ENCODE measurements at regions of chr1 and their contacts with region 1.

Region 1: GRCh38 chr1:154272217-154272998 is at the start of gene HAX1:
- DNase-seq: peak; percentile 99
- H3K4me3 Mint-ChIP-seq: peak within 1 kb of the TSS; percentile 99
- H3K27ac Mint-ChIP-seq: peak within 1 kb of the TSS; percentile 99
- H3K4me1 Mint-ChIP-seq: peaks cover 34% of the 10 kb centered on the region
- H3K27me3 Mint-ChIP-seq: no peaks in the 10 kb centered on the region
- total RNA-seq, gene HAX1: 168 to 169 TPM

Region 2: GRCh38 chr1:153967082-153968000 is 305.1 kb before region 1 on chr1 and contains the start of gene CREB3L4:
- CTCF ChIA-PET with region 1: no interaction called
- POLR2A ChIA-PET with region 1: no interaction called
- intact Hi-C with region 1: loop called (anchors 10 kb)
- DNase-seq: peak; percentile 92
- H3K4me3 Mint-ChIP-seq: peak within 1 kb of the TSS; percentile 87
- H3K27ac Mint-ChIP-seq: peak within 1 kb of the TSS; percentile 90
- H3K4me1 Mint-ChIP-seq: peaks cover 41% of the 10 kb centered on the region
- H3K27me3 Mint-ChIP-seq: no peaks in the 10 kb centered on the region
- total RNA-seq, gene CREB3L4: 8.5 to 8.7 TPM

Region 3: GRCh38 chr1:154198756-154199562 is 73.4 kb before region 1 on chr1:
- CTCF ChIA-PET with region 1: interaction called, 38 read pairs
- POLR2A ChIA-PET with region 1: no interaction called
- intact Hi-C with region 1: loop called (anchors 1 kb)
- DNase-seq: peak; percentile 47
- H3K4me3 Mint-ChIP-seq: no peak overlapping the region
- H3K27ac Mint-ChIP-seq: no peak overlapping the region
- H3K4me1 Mint-ChIP-seq: no peaks in the 10 kb centered on the region
- H3K27me3 Mint-ChIP-seq: peaks cover under 1% of the 10 kb centered on the region

Region 4: GRCh38 chr1:154220071-154220969 is 52.1 kb before region 1 on chr1 and contains the start of gene UBAP2L:
- CTCF ChIA-PET with region 1: interaction called, 7 read pairs
- POLR2A ChIA-PET with region 1: interaction called, 3 read pairs
- intact Hi-C with region 1: loop called (anchors 1 kb)
- DNase-seq: peak; percentile 99
- H3K4me3 Mint-ChIP-seq: peak within 1 kb of the TSS; percentile 90
- H3K27ac Mint-ChIP-seq: peak within 1 kb of the TSS; percentile 94
- H3K4me1 Mint-ChIP-seq: peaks cover 68% of the 10 kb centered on the region
- H3K27me3 Mint-ChIP-seq: peaks cover 2% of the 10 kb centered on the region
- total RNA-seq, gene UBAP2L: 180 to 183 TPM